ENCODE measurements at regions of chr14 and their contacts with region 1.

Region 1: GRCh38 chr14:77442196-77442595 is 15.2 kb downstream of the VIPAS39 start:
- DNase-seq: no peak
- H3K4me3 ChIP-seq: no peak overlapping the region
- H3K27ac ChIP-seq: no peak overlapping the region
- H3K4me1 ChIP-seq: no peaks in the 10 kb centered on the region
- H3K27me3 ChIP-seq: no peaks in the 10 kb centered on the region
- CTCF ChIP-seq: no peak
- EP300 ChIP-seq: no peak
- POLR2A ChIP-seq: no peak

Region 2: DNA sequence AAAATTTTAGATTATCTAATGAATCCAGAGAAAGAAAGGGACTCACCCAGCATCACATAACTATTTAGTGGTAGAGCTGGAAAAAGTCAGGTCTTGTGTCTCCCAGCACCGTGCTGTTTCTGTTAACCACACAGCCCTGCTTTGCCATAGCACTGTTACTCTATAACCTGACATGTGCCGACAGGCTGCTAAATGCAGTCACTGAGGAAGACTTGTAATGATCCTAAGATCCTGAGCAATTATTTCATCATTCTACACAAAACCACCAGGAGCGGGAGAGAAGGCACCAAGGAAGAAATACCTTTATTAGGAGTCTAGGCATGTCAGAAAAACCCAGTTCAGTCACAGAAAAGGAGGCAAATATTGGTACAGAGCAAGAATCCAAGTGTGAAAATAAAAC is 15.8 kb before region 1 on chr14:
- intact Hi-C with region 1: loop called in 1 of 4 experiments (anchors 1 kb)
- DNase-seq: no peak
- H3K4me3 ChIP-seq: no peak overlapping the region
- H3K27ac ChIP-seq: no peak overlapping the region
- H3K4me1 ChIP-seq: no peaks in the 10 kb centered on the region
- H3K27me3 ChIP-seq: no peaks in the 10 kb centered on the region
- CTCF ChIP-seq: no peak
- EP300 ChIP-seq: no peak
- POLR2A ChIP-seq: no peak